ENCODE measurements at regions of chr1 and their contacts with region 1.

Region 1: DNA sequence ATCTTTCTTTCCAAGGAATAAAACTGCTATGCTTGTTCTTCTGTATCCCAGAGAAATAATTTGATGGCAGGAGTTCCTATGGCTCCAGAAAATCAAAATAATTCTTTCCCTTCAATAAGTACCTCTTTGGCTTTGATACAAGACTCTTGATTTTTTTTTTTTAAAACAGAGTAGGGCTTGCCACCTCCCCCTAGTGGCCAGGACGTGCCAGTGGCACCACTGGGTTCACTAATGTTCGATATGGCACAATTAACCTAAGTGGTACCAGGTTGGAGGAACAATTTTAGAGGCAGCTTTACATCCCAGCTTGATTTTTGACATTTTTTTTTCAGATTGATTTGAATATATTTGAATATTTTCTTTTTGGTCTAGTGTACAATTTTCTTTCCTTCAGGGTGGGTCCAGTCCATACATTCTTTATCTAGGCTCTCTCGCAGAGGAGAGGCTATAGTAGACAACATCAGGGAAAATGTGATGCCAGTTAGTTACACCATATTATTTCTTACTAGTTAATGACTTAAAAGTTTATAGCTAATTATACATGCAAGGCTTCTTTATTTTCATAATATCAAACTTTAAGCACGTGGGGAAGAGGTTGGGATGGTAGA is 330.9 kb downstream of the S1PR1 start:
- DNase-seq: peak; percentile 11
- ATAC-seq: peak; percentile 83
- H3K4me3 ChIP-seq: no peak overlapping the region
- H3K27ac ChIP-seq: no peak overlapping the region
- H3K4me1 ChIP-seq: no peaks in the 10 kb centered on the region
- H3K27me3 ChIP-seq: no peaks in the 10 kb centered on the region
- CTCF ChIP-seq: peak; percentile 71
- POLR2A ChIP-seq: no peak
- RAD21 ChIP-seq: peak; percentile 27; the same call in 1 of the 2 replicates

Region 2: DNA sequence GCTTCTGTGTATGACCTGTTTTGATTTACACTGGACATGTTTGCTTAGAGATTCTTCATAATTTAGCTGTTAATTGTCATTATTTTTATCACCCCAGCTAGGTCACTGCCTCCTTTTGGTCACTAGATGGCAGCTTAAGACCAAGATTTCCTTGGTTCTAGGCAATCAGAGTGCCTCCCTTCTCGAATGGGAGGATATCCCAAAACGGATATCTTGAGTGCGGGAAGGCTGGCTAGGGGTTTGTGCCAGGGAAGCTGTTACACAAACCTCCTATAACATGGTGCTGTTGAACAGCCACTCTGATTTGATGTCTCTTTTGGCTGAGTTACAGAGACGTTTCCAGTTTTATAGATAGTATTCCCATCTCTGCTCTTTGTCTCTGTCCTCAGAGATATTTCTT is 47.4 kb before region 1 on chr1:
- CTCF ChIA-PET with region 1: no interaction called
- POLR2A ChIA-PET with region 1: no interaction called
- dilution Hi-C with region 1: no loop called
- in situ Hi-C with region 1: no loop called
- intact Hi-C with region 1: loop called (anchors 1 kb)
- DNase-seq: peak; percentile 26
- ATAC-seq: peak; percentile 75
- H3K4me3 ChIP-seq: no peak overlapping the region
- H3K27ac ChIP-seq: no peak overlapping the region
- H3K4me1 ChIP-seq: no peaks in the 10 kb centered on the region
- H3K27me3 ChIP-seq: no peaks in the 10 kb centered on the region
- CTCF ChIP-seq: peak; percentile 68
- POLR2A ChIP-seq: no peak
- RAD21 ChIP-seq: peak; percentile 67

Region 3: GRCh38 chr1:101550581-101550980 is 17.1 kb before region 1 on chr1:
- CTCF ChIA-PET with region 1: no interaction called
- POLR2A ChIA-PET with region 1: no interaction called
- dilution Hi-C with region 1: no loop called
- in situ Hi-C with region 1: no loop called
- intact Hi-C with region 1: no loop called
- DNase-seq: no peak
- ATAC-seq: no peak
- H3K4me3 ChIP-seq: no peak overlapping the region
- H3K27ac ChIP-seq: no peak overlapping the region
- H3K4me1 ChIP-seq: no peaks in the 10 kb centered on the region
- H3K27me3 ChIP-seq: no peaks in the 10 kb centered on the region
- CTCF ChIP-seq: no peak
- POLR2A ChIP-seq: no peak
- RAD21 ChIP-seq: no peak

Region 4: GRCh38 chr1:101732261-101732660 is 164.6 kb after region 1 on chr1:
- CTCF ChIA-PET with region 1: no interaction called
- POLR2A ChIA-PET with region 1: no interaction called
- dilution Hi-C with region 1: no loop called
- in situ Hi-C with region 1: no loop called
- intact Hi-C with region 1: no loop called
- DNase-seq: no peak
- ATAC-seq: no peak
- H3K4me3 ChIP-seq: no peak overlapping the region
- H3K27ac ChIP-seq: no peak overlapping the region
- H3K4me1 ChIP-seq: no peaks in the 10 kb centered on the region
- H3K27me3 ChIP-seq: no peaks in the 10 kb centered on the region
- CTCF ChIP-seq: no peak
- POLR2A ChIP-seq: no peak
- RAD21 ChIP-seq: no peak

Measured in IMR-90 (cell line).